ENCODE measurements at regions of chr3 and their contacts with region 1.

Region 1: DNA sequence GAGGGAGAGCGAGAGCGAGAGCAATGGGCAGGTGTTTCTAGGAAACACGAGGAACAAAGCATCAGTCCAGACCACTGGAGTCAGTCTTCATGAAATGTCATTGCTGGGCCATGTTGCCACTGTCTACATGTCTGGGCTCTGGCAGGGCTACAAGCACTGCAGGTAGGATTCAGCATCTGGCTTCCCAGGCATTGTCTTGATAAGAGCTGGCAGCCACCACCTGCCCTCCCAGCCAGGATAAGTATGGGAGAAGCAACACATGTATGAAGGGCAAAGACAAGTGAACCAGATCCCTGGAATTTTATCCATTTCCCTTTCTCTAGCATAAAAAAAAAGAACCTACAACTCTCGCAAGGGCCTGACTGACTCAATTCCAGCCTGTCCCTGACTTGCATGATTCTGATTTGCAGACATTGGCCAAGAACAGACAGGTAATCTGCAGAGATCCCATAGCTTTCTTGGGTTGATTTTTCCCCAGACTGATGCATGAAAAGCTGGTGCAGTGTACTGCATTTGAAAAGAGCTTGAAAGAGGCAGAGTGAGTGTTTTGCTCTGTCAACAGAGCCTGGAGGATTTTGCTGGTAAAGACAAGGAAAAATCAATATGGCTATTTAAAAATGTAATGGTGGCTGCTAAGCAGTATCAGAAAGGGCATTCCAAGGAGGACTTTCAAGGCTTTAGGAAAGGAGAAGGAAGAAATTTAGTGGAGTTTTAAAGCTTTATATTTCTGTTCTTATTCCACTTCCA is 157.2 kb upstream of the MYRIP start:
- DNase-seq: no peak

Region 2: DNA sequence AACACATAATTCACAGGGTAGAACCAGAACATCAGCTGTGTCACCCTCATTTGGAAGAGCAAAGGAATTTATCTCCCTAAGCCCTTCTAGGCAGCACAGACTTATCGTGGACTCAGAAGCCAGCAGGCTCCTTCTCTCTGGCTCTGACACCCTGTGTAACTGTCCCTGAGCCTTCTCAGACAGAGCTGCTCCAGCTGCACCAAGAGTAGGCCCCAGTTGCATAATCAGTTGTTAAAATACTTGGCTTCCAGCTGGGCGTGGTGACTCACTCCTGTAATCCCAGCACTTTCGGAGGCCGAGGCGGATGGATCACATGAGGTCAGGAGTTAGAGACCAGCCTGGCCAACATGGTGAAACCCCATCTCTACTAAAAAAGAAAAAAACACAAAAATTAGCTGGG is 1247.9 kb before region 1 on chr3:
- intact Hi-C with region 1: loop called in 1 of 2 experiments (anchors 10 kb)
- DNase-seq: no peak

Region 3: DNA sequence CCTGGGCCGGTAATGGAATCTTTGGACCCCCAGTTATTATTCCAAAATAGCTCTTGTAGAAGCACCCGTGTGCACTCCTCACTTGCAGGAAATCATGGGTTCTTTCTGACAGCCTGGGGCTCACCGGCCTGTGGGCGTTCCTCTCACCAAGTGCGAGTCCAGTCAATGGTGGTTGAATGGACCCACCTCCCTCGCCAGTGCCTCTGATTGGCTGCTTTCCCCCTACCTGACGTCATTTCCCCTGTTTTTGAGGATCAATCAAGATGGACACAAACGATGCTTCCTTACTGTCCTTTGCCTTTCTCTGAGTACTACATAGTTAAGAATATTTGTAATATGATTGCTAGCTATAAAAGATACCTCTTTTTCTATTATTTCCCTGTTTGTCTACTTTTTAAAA is 166.6 kb before region 1 on chr3:
- intact Hi-C with region 1: no loop called
- DNase-seq: no peak

Measured in posterior vena cava (tissue), 2 donors.